ENCODE measurements at regions of chr19 and their contacts with region 1.

Region 1: DNA sequence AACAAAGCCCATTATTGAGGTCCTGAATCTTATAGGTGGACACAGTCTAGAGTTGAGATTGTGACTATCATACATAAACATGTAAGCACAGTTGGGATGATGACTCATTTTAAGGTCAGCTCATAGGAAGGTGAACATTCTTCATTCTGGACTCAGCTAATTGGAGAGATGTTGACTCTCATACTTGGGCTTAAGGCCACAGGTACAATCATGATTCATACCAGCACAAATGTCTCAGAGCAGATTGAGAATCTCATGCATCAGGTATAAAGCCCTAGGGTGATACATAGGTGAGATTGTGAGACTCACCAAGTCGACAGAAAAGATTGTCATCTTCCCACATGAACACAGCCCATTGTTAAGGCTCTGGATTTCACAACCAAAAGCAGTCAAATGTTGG is 62.3 kb upstream of the ZNF724 start:
- DNase-seq: peak; percentile 97
- H3K4me3 ChIP-seq: no peak overlapping the region
- H3K27ac ChIP-seq: no peak overlapping the region
- H3K4me1 ChIP-seq: no peaks in the 10 kb centered on the region
- H3K27me3 ChIP-seq: no peaks in the 10 kb centered on the region
- CTCF ChIP-seq: no peak

Region 2: GRCh38 chr19:23222998-23223652 is 89.4 kb before region 1 on chr19:
- CTCF ChIA-PET with region 1: no interaction called
- dilution Hi-C with region 1: no loop called
- in situ Hi-C with region 1: no loop called
- intact Hi-C with region 1: no loop called
- DNase-seq: peak; percentile 2
- H3K4me3 ChIP-seq: no peak overlapping the region
- H3K27ac ChIP-seq: no peak overlapping the region
- H3K4me1 ChIP-seq: no peaks in the 10 kb centered on the region
- H3K27me3 ChIP-seq: no peaks in the 10 kb centered on the region
- CTCF ChIP-seq: no peak

Region 3: DNA sequence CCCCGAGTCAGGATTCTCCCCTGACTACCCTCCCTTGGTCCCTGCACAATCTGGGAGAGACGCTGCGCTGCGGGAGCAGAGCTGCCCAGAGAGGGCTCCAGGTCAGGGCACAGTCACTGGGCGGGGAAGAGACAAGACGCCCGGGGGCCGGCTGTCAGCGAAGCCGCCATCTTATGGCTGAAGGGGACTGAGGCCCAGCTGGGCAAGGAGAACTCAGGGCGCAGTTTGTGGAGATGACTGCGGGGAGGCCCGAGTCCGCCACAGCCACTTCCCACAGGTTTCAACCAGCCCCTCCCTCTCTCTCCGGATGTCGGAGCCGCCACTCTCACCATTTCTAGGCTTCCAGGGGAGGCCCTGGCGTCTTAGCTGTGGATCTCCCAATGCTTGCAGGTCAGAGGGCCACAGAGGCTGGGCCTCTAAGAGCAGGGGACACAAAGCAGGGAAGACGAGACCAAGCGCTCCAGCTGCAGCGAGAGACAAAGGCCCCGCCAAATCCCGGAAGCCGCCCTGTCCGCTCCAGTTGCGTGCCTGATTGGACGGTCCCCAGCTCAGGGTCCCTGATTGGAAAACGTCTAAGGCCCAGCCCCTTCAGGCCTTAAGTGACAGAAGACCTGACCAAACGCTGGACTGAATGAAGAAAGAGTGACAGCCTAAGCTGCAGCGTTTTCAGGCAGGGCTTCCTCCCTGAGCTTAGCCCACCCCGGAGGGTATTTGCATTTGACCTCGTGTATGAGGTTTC is 62.5 kb before region 1 on chr19 and contains the start of gene ZNF724:
- CTCF ChIA-PET with region 1: no interaction called
- dilution Hi-C with region 1: no loop called
- in situ Hi-C with region 1: no loop called
- intact Hi-C with region 1: loop called (anchors 2 kb)
- DNase-seq: peak; percentile 96
- H3K4me3 ChIP-seq: peak within 1 kb of the TSS; percentile 68 to 99 (median 77)
- H3K27ac ChIP-seq: peak within 1 kb of the TSS; percentile 57
- H3K4me1 ChIP-seq: no peaks in the 10 kb centered on the region
- H3K27me3 ChIP-seq: peaks cover 1% of the 10 kb centered on the region
- CTCF ChIP-seq: no peak
- total RNA-seq, gene ZNF724: 8.3 to 10.3 TPM